T-cell (primary cell): ENCODE measurements at regions of chr5 and their contacts with region 1.

Region 1: DNA sequence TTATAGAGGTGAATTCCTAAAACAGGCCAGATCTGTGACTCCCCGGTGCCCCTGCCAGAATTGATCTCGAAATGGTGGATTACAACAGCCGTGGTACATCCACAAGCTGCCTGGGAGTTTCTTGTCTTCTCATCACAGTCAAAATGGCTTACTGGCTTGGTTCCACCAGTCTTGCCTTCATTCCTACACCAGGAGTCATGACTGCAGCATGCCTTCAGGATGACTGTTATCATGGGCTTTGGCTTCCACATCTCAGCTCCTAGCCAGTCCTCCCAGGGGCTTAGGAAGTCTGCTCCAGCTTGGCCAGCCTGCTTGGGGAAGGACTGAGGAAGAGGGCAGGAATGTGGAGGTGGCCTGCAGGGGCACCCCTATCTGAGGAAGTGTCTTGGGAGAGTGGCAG is 132.9 kb upstream of the NR3C1 start:
- DNase-seq: no peak
- ATAC-seq: no peak
- H3K4me3 ChIP-seq: no peak overlapping the region
- H3K4me3 Mint-ChIP-seq: no peak overlapping the region
- H3K27ac ChIP-seq: no peak overlapping the region
- H3K27ac Mint-ChIP-seq: no peak overlapping the region
- H3K4me1 ChIP-seq: no peaks in the 10 kb centered on the region
- H3K4me1 Mint-ChIP-seq: no peaks in the 10 kb centered on the region
- H3K27me3 ChIP-seq: no peaks in the 10 kb centered on the region
- H3K27me3 Mint-ChIP-seq: peaks cover 3 to 4% of the 10 kb centered on the region in 2 donors

Region 2: GRCh38 chr5:143226359-143226758 is 310.0 kb before region 1 on chr5:
- CTCF ChIA-PET with region 1: no interaction called
- POLR2A ChIA-PET with region 1: interaction called in 1 of 2 experiments, 11 read pairs
- DNase-seq: no peak
- ATAC-seq: no peak
- H3K4me3 ChIP-seq: no peak overlapping the region
- H3K4me3 Mint-ChIP-seq: no peak overlapping the region
- H3K27ac ChIP-seq: no peak overlapping the region
- H3K27ac Mint-ChIP-seq: peak overlapping the region in 1 of 2 donors; percentile 57
- H3K4me1 ChIP-seq: peaks cover 28 to 46% of the 10 kb centered on the region in 2 experiments
- H3K4me1 Mint-ChIP-seq: peaks cover 44 to 70% (median 57%) of the 10 kb centered on the region in 3 donors
- H3K27me3 ChIP-seq: no peaks in the 10 kb centered on the region
- H3K27me3 Mint-ChIP-seq: no peaks in the 10 kb centered on the region